Tibial artery (tissue), 4 donors: ENCODE measurements at regions of chr13 and their contacts with region 1.

Region 1: DNA sequence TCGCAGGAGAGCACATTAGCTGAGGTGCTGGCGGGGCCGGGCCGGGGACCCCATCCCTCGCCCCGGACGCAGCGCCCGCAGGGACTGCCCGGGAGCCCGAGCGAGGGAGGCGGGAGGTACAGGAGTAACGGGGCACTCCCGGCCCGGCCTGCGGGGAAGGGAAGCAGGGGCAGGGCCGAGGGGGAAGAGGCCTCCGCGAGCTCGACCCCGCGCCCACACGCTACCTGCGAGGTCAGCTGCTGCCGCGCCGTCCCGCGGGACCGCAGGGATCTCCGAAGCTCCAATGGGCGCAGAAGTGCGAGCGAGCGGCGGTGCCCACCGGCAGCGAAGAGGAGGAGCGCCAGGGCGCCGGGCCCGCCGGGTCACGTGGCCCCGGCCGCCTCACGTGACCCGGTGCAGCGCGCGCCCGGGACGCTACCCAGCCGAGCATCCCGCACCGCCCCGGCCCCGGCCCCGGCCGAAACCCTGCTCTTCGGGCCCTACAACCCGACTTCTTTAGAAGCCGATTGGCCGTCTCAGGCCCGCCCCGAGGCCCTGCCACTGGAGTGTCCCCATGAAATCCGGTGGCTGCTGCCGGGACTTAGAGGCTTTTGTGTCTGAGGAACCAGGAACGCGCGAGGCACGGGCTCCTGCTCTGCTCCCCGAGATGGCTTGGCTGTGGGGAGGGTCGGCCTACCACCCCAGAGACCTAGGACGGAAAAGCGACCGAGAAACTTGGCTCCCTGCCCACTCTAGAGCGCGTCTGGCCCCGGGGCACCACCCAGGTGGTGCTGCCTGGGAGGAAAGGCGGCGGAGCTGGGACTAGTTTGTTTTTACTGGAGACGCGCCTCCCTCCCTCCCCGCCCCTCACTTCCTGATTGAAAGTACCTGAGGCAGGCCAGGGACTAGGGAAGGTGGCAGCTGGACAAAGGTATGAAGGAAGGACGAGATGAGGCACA is at the start of gene RCBTB1:
- DNase-seq: peak; percentile 47 to 81
- H3K4me3 ChIP-seq: peak within 1 kb of the TSS; percentile 84 to 89
- H3K27ac ChIP-seq: peak within 1 kb of the TSS; percentile 77 to 78
- H3K4me1 ChIP-seq: peaks cover 0 to 19% (median 5%) of the 10 kb centered on the region in 4 donors
- H3K27me3 ChIP-seq: no peaks in the 10 kb centered on the region
- CTCF ChIP-seq: no peak

Region 2: DNA sequence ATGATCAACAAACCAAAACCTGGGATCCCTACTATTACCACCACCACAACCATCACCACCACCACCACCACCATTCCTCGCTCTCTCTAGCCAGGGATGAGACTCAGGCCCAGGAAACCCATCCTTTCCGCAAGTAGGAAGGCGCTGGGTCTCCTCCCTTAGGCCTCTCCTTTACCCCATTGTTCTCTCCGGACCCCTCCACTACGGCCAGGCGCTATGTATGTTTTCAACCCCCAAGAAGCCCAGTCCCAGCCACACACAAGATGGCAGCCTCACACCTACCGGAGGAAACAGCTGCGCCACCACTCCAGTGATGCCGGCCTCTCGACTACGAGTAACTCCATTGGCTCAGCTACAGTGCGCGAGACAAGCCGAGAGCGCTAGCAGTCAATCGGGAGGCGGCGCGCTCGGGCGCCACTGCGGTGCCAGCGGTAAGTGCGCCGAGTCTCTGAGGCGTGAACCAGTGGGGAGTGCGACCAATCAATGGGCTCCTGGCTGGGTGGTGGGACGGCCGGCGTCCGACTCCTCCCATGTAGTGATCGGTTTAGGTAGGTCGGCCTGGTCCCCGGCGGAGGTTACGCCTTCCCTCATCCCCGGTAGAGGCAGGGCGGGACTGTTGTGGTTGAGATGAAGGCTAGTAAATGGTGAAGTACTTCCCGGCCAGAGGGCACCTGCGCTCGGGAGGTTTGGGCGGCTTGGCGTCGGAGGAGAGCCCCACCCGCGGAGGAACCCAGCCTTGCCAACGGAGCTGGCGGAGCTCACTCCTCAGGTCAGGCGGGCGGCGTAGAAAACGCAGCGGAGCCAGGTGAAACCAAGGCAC is 141.6 kb before region 1 on chr13 and contains the starts of genes CAB39L and SETDB2:
- intact Hi-C with region 1: loop called (anchors 10 kb)
- DNase-seq: peak; percentile 99 to 100
- H3K4me3 ChIP-seq: peak within 1 kb of the TSS; percentile 83 to 84
- H3K27ac ChIP-seq: peak within 1 kb of the TSS; percentile 94 to 95
- H3K4me1 ChIP-seq: peaks cover 0 to 45% (median 10%) of the 10 kb centered on the region in 4 donors
- H3K27me3 ChIP-seq: no peaks in the 10 kb centered on the region
- CTCF ChIP-seq: peak; percentile 32 to 44